Dendritic cell treated with granulocyte-macrophage colony-stimulating factor and Interleukin-4, amounts not matched to agents 40 ng/mL and 50 ng/mL, for 4 days (primary cell): ENCODE measurements at regions of chr13 and their contacts with region 1.

Region 1: GRCh38 chr13:94674609-94675348 is 37.6 kb downstream of the SOX21 start:
- H3K4me3 Mint-ChIP-seq: no peak overlapping the region
- H3K27ac Mint-ChIP-seq: no peak overlapping the region
- H3K4me1 Mint-ChIP-seq: no peaks in the 10 kb centered on the region
- H3K27me3 Mint-ChIP-seq: peaks cover 17% of the 10 kb centered on the region

Region 2: DNA sequence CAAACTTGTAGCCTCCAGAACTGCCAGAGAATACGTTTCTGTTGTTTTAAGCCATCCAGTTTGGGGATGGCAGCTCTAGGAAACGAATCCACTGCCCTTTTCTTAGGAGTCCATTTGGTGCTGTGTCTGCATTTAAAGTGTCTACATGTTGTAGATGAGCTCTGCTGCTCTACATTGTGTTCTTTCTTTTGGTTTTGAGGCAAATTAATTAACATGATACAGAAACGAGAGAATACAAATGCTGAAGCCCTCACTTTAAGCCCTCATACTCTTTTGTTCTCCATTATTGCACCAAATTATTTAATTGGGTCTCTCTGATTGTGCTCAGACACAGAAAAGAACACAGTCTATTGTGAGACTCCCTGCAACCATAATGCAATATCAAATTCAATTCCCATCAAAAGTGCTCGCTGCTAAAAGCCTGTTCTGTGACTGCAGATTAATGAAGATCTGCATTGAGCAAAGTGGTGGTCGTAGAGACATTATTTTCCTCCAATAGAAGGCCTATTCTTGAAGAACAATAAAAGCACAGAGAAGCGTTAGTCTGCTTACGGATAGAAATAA is 203.9 kb after region 1 on chr13:
- intact Hi-C with region 1: no loop called
- H3K4me3 Mint-ChIP-seq: no peak overlapping the region
- H3K27ac Mint-ChIP-seq: no peak overlapping the region
- H3K4me1 Mint-ChIP-seq: no peaks in the 10 kb centered on the region
- H3K27me3 Mint-ChIP-seq: no peaks in the 10 kb centered on the region

Region 3: GRCh38 chr13:95156208-95156607 is 481.4 kb after region 1 on chr13:
- intact Hi-C with region 1: loop called (anchors 10 kb)
- H3K4me3 Mint-ChIP-seq: no peak overlapping the region
- H3K27ac Mint-ChIP-seq: no peak overlapping the region
- H3K4me1 Mint-ChIP-seq: peaks cover 47% of the 10 kb centered on the region
- H3K27me3 Mint-ChIP-seq: no peaks in the 10 kb centered on the region

Region 4: GRCh38 chr13:95181586-95181985 is 506.8 kb after region 1 on chr13:
- intact Hi-C with region 1: loop called (anchors 10 kb)
- H3K4me3 Mint-ChIP-seq: no peak overlapping the region
- H3K27ac Mint-ChIP-seq: peak overlapping the region; percentile 42
- H3K4me1 Mint-ChIP-seq: peaks cover 37% of the 10 kb centered on the region
- H3K27me3 Mint-ChIP-seq: no peaks in the 10 kb centered on the region

Region 5: DNA sequence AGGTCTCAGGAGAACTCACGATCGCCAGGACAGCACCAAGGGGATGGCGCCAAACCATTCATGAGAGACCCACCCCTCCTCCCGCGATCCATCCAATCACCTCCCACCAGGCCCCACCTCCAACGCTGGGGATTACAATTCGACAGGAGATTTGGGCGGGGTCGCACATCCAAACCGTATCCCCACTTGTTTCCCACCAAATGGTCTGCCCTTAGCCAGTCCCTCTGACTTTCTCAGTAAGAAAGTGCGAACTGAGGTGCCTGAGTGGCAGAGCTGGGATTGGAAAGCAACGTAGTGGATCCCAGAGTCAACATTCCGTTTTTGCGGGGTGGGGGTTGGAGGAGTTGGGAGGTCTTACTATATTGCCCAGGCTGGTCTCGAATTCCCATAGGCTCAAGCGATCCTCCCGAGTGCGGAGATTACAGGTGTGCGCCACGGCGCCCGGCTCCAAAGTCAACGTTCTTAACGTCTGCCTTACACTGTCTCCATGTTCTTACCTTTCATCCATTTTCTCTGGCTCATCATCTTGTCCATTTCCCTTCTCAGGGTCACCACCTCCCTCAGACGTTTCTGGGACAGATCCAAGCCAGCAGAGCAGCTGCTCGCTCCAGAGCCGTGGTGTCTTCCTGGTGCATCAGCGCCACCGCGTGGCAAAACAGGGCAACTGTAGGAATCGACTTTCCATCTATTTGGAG is 729.2 kb after region 1 on chr13:
- intact Hi-C with region 1: loop called (anchors 1 kb)
- H3K4me3 Mint-ChIP-seq: peak overlapping the region; percentile 58
- H3K27ac Mint-ChIP-seq: no peak overlapping the region
- H3K4me1 Mint-ChIP-seq: peaks cover 19% of the 10 kb centered on the region
- H3K27me3 Mint-ChIP-seq: peaks cover 17% of the 10 kb centered on the region

Region 6: GRCh38 chr13:95479731-95480130 is 805.0 kb after region 1 on chr13:
- intact Hi-C with region 1: loop called (anchors 5 kb)
- H3K4me3 Mint-ChIP-seq: peak overlapping the region; percentile 30
- H3K27ac Mint-ChIP-seq: peak overlapping the region; percentile 88
- H3K4me1 Mint-ChIP-seq: peaks cover 28% of the 10 kb centered on the region
- H3K27me3 Mint-ChIP-seq: peaks cover 14% of the 10 kb centered on the region